ENCODE measurements at regions of chr5 and their contacts with region 1.

Region 1: DNA sequence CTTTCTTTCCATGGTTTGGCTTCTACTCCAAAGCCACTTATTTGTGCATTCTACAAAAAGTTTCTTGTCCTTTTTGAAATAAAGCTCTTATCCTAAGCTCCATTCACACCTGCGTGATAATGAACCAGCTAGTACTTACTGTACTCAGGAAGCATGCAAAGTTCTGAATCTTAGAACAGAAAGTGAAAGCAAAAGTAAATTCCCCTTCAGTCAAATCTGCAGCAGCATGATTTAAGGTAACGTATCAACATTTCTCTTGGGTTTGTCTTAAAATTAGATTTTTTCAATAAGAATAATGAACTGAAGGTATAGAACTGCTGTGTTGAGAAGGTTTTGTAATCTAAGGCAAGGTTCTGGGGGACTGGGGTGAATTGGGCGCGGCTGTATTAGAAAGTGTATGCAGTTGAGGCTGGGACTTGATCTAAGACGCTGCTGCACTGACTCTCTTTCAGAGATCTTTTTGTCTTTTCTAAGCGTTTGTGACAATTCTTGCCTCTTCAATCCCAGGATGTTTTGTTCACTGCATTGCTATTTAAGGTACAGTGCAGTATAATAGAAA is at the start of gene ERAP2:
- DNase-seq: no peak
- ATAC-seq: peak; percentile 73
- H3K4me3 ChIP-seq: peak within 1 kb of the TSS; percentile 61 to 71
- H3K27ac ChIP-seq: peak within 1 kb of the TSS; percentile 97
- H3K4me1 ChIP-seq: peaks cover 9% of the 10 kb centered on the region; the same call in 1 of the 2 replicates
- H3K27me3 ChIP-seq: no peaks in the 10 kb centered on the region
- CTCF ChIP-seq: no peak
- total RNA-seq, gene ERAP2: 15.5 TPM

Region 2: DNA sequence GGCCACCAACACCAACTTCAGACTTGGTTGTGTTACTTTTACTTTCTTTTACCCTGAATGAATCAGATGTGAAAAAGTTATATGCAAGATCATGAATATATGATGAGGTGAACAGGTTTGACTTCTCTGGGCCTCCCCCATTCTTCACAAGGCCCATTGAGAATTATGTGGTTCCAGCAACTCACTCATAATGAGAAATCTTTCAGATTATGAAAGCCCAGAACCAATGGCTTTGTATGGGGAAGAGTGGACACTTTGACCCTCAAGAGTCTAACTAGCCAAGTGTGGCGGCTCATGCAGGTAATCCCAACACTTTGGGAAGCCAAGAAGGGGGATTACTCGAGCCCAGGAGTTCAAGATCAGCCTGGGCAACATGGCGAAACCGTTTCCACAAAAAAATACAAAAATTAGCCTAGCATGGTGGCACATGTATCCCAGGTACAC is 43.4 kb after region 1 on chr5:
- CTCF ChIA-PET with region 1: no interaction called
- POLR2A ChIA-PET with region 1: no interaction called
- in situ Hi-C with region 1: no loop called
- intact Hi-C with region 1: no loop called
- DNase-seq: no peak
- ATAC-seq: no peak
- H3K4me3 ChIP-seq: no peak overlapping the region
- H3K27ac ChIP-seq: no peak overlapping the region
- H3K4me1 ChIP-seq: peaks cover 12% of the 10 kb centered on the region
- H3K27me3 ChIP-seq: no peaks in the 10 kb centered on the region
- CTCF ChIP-seq: no peak

Region 3: DNA sequence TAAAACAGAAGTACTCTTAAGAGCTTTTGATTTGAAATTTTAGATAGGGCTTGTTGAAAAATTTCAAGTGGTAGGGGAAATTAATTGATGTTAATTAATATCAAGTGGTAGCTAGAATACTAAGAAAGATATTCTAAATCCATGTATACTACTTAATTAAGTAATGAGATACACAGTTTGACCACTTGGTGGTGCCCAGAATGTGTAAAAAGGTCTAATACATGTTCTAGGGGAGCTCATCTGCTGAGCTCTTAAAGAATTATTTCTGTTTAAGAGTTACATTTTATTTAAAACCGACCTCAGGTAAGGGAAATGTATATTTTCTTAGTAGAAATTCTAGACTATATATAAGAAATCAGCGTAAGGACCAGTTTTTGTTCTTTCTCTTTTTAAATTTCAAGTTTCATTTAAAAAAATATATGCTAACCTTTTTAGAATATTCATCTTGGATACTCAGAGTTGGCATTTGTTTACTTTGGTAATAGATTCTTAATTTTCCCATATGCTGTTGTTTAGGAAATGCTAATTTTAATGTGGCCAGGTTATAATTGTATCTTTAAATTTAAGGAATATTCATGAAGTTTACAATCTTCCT is 121.0 kb after region 1 on chr5:
- CTCF ChIA-PET with region 1: no interaction called
- POLR2A ChIA-PET with region 1: no interaction called
- in situ Hi-C with region 1: no loop called
- intact Hi-C with region 1: loop called (anchors 10 kb)
- DNase-seq: peak; percentile 20
- ATAC-seq: 0 out of 2 replicates have a peak, but pooled peaks have one; percentile 65
- H3K4me3 ChIP-seq: no peak overlapping the region
- H3K27ac ChIP-seq: no peak overlapping the region
- H3K4me1 ChIP-seq: no peaks in the 10 kb centered on the region
- H3K27me3 ChIP-seq: no peaks in the 10 kb centered on the region
- CTCF ChIP-seq: peak; percentile 53; the same call in 1 of the 2 replicates